Panc1 (cell line): ENCODE measurements at regions of chrX and their contacts with region 1.

Region 1: GRCh38 chrX:140141444-140142029 is 176.2 kb upstream of the CXorf66 start:
- DNase-seq: peak; percentile 20
- ATAC-seq: no peak; the same call in 1 of the 2 replicates
- H3K4me3 ChIP-seq: no peak overlapping the region
- H3K27ac ChIP-seq: no peak overlapping the region
- H3K4me1 ChIP-seq: no peaks in the 10 kb centered on the region
- H3K27me3 ChIP-seq: no peaks in the 10 kb centered on the region
- CTCF ChIP-seq: peak; percentile 78

Region 2: DNA sequence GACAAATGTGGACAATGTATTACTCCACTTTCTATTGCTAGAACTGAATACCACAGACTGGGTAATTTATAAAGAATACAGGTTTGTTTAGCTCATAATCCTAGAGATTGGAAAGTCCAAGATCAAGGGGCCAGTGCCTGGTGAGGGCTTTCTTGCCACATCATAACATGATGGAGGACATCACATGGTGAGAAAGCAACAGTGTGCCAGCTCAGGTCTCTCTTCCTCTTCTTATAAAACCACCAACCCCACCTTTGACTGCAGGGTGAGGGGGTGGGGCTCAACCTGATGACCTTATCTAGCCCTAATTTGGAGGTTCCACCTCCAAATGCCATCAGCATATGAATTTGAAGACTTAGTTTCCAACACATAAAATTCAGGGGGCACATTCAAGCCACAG is 70.5 kb before region 1 on chrX:
- CTCF ChIA-PET with region 1: no interaction called
- POLR2A ChIA-PET with region 1: no interaction called
- in situ Hi-C with region 1: no loop called
- intact Hi-C with region 1: loop called (anchors 1 kb)
- DNase-seq: no peak
- ATAC-seq: no peak
- H3K4me3 ChIP-seq: no peak overlapping the region
- H3K27ac ChIP-seq: no peak overlapping the region
- H3K4me1 ChIP-seq: no peaks in the 10 kb centered on the region
- H3K27me3 ChIP-seq: no peaks in the 10 kb centered on the region; the same call in 1 of the 2 replicates
- CTCF ChIP-seq: no peak